ENCODE measurements at regions of chr18 and their contacts with region 1.

Region 1: DNA sequence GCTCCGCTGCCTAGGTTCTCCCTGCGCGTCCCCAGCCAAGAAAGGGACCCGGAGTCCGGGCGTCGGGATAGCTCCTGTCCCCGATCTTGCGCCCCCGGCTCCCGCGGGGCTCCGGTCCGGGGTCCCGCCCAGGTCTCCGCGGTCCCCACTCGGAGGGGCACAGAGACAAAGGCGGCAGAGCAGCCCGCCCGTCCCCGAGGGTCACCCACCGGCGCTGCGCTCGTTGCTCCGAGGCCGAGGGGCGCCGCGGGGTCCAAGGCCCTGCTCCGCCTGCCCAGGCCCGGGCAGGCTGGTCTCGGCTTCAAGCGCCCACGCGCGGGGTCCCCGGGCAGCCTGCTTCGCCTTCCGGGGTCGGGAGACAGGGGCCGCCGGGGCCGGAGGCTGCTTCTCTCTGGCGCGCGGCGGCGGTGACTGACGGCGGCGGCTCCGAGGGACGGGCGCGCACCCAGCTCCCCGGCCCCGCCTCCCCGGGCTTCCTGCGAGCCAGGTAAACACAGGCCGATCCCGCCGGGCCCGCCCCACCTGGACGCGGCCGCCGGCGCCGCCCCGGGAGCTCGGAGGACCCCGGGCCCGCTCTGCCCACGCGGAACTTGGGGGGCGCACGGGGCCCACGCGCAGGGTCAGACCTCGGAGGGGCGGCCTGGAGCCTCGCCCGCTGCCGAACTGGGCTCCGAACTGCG is at the start of gene MBP:
- DNase-seq: peak; percentile 90
- ATAC-seq: peak; percentile 50
- total RNA-seq, gene MBP: 34.9 TPM

Region 2: DNA sequence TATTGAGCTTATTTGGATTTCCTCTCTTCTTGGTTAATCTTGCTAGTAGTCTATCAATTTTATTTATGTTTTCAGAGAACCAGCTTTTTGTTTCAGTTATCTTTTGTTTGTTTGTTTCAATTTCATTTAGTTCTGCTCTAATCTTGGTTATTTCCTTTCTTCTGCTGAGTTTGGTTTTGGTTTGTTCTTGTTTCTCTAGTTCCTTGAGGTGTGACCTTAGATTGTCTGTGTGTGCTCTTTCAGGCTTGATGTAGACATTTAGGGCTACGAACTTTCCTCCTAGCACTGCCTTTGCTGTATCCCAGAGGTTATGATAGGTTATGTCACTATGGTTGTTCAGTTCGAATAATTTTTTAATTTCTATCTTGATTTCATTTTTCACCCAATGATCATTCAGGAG is 168.6 kb before region 1 on chr18:
- intact Hi-C with region 1: no loop called
- DNase-seq: no peak
- ATAC-seq: no peak

Region 3: DNA sequence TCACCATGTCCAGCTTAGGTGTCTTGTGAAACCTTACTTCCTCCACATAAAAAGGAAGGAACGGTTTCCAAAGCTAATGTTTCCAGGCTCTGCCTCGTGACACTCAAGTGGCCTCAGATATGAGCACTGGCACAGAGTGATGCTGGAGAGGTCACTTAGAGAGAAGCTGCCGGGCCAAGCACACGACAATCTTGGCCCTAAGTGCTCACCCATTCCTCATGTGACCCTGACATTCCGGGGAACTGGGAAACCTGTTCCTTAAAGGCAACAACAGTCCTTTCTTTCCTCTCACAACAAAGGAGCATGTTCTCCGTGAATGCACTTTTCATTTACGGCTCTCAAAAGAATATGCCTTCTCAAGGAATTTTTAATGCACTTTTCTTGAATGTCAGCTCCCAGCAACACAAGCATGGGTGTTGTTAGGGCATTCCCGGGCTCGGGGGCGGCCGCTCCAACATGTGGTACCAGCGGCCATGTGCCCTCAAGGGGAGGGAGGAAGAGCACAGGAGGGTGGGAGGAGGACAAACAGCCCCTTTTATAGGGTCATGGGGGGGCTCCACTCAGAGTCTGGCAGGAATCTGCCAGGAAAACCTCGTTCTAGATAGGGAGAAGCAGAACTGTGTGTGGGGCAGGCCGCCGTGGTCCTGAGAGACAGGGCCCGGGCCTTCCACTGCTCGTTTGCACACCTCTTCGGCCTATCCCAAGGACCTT is 118.5 kb before region 1 on chr18:
- intact Hi-C with region 1: loop called (anchors 5 kb)
- DNase-seq: no peak
- ATAC-seq: peak; percentile 96

Region 4: DNA sequence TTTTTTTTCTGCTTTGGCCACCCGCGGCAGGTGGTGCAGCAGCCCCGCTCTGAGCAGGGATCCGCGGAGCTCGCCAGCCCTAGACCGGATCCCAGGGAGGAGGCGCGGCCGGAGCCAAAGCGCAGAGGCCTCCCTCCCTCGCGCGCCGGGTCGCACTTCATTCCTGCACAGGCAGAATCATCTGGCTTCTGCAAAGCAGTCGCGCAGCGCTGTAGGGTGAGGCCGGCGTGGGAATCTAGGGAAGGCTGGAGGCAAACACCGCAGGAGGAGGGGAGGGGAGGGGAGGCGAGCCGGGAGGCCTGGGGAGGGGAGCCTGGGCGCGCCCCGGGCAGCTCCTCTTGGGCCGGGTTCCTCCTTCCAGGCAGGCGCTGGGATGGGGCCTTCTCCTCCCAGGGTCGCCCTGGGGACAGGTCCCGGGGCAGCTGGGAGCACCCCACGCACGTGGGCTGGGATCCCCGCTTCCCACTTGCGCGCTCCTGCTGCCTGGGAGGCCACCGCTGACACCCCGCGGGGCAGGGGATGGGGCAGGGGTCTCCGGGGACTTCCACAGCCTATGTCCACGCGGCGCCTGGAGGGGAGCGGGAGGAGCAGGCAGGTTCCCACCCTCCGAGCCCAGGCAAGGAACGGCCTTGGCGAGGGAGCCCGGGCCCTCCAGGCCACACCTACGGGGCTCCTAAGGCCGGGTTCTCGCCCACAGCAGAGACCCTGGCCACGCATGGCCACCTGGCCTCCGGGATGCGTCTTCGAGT is 44.9 kb before region 1 on chr18:
- intact Hi-C with region 1: loop called (anchors 5 kb)
- DNase-seq: peak; percentile 81
- ATAC-seq: peak; percentile 79

Region 5: DNA sequence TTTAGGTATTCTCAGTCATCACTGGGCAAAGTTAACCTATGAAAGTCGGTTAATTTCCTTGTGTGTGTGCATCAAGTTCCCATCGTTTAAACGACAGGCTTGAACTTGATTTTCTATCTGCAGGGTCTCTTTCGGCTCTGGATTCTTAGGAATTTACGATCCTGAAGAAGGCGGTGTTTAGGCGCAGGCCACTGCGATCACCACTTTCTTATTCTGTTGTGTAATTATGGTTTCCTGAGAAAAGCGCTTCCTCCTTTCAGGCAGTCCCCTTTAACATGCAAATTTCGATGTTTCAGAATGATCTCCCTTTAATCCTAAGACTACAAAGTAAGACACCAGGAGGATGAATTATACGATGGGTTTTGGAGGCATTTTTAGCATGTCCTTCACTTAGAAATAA is 28.0 kb after region 1 on chr18:
- intact Hi-C with region 1: no loop called
- DNase-seq: no peak
- ATAC-seq: no peak